Heart right ventricle (tissue), 16 donors: ENCODE measurements at regions of chr17 and their contacts with region 1.

Region 1: GRCh38 chr17:40522250-40522952 is 21.0 kb upstream of the TNS4 start:
- DNase-seq: no peak
- ATAC-seq: peak in 2 of 8 donors; percentile 39 to 58
- H3K4me3 ChIP-seq: no peak overlapping the region
- H3K27ac ChIP-seq: peak overlapping the region in 1 of 10 donors; percentile 60
- H3K4me1 ChIP-seq: peaks cover 0 to 19% (median 0%) of the 10 kb centered on the region in 9 donors
- H3K27me3 ChIP-seq: peaks cover 0 to 10% (median 0%) of the 10 kb centered on the region in 7 donors
- CTCF ChIP-seq: no peak

Region 2: GRCh38 chr17:40485851-40486512 is 36.4 kb before region 1 on chr17:
- intact Hi-C with region 1: loop called in 1 of 10 experiments (anchors 5 kb)
- DNase-seq: no peak
- ATAC-seq: peak in 7 of 8 donors; percentile 32 to 82 (median 64)
- H3K4me3 ChIP-seq: no peak overlapping the region
- H3K27ac ChIP-seq: peak overlapping the region in 3 of 10 donors; percentile 41 to 82 (median 58)
- H3K4me1 ChIP-seq: peaks cover 0 to 45% (median 0%) of the 10 kb centered on the region in 9 donors
- H3K27me3 ChIP-seq: no peaks in the 10 kb centered on the region
- CTCF ChIP-seq: no peak

Region 3: DNA sequence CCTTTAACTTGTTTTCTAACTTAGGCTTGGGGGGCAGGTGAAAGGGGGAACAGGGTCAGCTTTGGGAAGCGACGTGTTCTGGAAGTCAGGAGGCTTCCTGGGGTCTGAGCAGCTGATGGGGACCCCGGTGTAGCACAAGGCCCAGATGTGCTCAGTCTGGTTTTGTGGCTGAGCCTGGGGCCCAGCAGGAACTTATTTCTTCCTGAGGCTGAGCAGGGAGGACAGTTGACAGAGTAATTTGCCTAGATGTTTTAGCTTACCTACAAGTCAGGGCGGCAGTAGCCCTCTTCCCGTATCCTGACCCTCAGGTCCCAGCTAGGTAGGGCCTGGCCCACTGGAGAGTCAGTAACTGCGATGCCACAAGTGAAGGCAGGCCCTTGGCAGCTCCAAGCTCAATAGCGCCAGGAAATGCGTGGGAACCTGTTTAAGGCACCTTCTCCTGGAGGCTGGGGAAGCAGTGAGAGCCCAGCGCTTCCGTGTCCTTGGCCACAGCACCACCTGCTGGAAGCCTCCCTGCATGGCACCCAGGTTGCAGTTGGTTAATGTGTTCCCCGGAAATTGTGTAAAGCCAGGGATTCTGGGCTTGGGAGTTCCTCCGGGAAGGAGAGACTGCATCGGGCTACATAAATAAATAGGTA is 37.7 kb after region 1 on chr17:
- intact Hi-C with region 1: no loop called
- DNase-seq: peak; percentile 89 to 92
- ATAC-seq: peak; percentile 76 to 89 (median 83)
- H3K4me3 ChIP-seq: peak overlapping the region in 5 of 10 donors; percentile 6 to 40 (median 20)
- H3K27ac ChIP-seq: peak overlapping the region in 9 of 10 donors; percentile 61 to 94 (median 82)
- H3K4me1 ChIP-seq: peaks cover 28 to 72% (median 53%) of the 10 kb centered on the region in 9 donors
- H3K27me3 ChIP-seq: peaks cover 0 to 21% (median 0%) of the 10 kb centered on the region in 7 donors
- CTCF ChIP-seq: peak; percentile 95 to 99 (median 98)